Heart right ventricle (tissue), 16 donors: ENCODE measurements at regions of chr6 and their contacts with region 1.

Region 1: GRCh38 chr6:164106345-164106769 is 691.8 kb downstream of the QKI start:
- DNase-seq: peak; percentile 70 to 79
- ATAC-seq: peak; percentile 26 to 70 (median 58)
- H3K4me3 ChIP-seq: peak overlapping the region in 8 of 10 donors; percentile 10 to 36 (median 30)
- H3K27ac ChIP-seq: peak overlapping the region; percentile 80 to 97 (median 90)
- H3K4me1 ChIP-seq: peaks cover 3 to 74% (median 37%) of the 10 kb centered on the region in 9 donors
- H3K27me3 ChIP-seq: no peaks in the 10 kb centered on the region
- CTCF ChIP-seq: peak; percentile 43 to 73 (median 67)

Region 2: DNA sequence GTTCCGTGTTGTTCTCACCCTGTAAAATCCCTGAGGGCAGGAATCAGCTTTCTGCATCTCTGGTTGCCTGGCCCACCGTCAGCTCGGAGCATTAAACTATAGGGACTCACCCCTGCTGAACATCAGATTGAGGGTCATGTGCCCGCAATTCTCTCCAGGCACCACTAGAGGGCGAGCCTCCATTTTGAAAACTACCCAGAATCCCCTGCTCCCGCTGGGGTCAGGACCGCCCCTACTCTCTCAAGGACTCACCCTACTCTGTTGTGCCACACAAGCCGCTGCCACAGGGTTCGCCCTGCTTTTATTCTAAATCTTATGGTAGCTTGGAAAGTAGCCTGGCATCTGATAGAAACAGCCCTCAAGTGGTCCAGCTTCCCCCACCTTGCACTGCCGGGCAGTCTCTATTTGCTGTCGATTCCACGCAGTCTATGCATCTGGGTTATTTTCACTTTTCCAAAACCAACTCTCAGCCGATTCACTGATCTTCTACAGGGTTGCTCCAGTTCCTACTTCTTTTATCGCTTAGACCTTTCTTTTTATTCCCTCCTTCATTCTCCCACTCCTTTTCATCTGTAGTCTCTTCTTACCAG is 936.0 kb before region 1 on chr6:
- intact Hi-C with region 1: loop called in 1 of 10 experiments (anchors 10 kb)
- DNase-seq: no peak
- ATAC-seq: peak in 1 of 8 donors; percentile 37
- H3K4me3 ChIP-seq: no peak overlapping the region
- H3K27ac ChIP-seq: no peak overlapping the region
- H3K4me1 ChIP-seq: no peaks in the 10 kb centered on the region
- H3K27me3 ChIP-seq: no peaks in the 10 kb centered on the region
- CTCF ChIP-seq: peak; percentile 16 to 69 (median 55)

Region 3: GRCh38 chr6:163413345-163414116 is 692.8 kb before region 1 on chr6:
- intact Hi-C with region 1: loop called in 7 of 10 experiments (anchors 2 to 10 kb)
- DNase-seq: peak; percentile 90 to 91
- ATAC-seq: peak; percentile 87 to 96 (median 90)
- H3K4me3 ChIP-seq: peak overlapping the region; percentile 48 to 85 (median 74)
- H3K27ac ChIP-seq: peak overlapping the region; percentile 95 to 100 (median 100)
- H3K4me1 ChIP-seq: peaks cover 0 to 28% (median 13%) of the 10 kb centered on the region in 9 donors
- H3K27me3 ChIP-seq: no peaks in the 10 kb centered on the region
- CTCF ChIP-seq: peak in 2 of 9 donors; percentile 6 to 8

Region 4: GRCh38 chr6:163565140-163565539 is 541.2 kb before region 1 on chr6:
- intact Hi-C with region 1: loop called in 2 of 10 experiments (anchors 10 kb)
- DNase-seq: no peak
- ATAC-seq: peak in 5 of 8 donors; percentile 48 to 70 (median 64)
- H3K4me3 ChIP-seq: no peak overlapping the region
- H3K27ac ChIP-seq: peak overlapping the region in 3 of 10 donors; percentile 5 to 40 (median 26)
- H3K4me1 ChIP-seq: peaks cover 0 to 75% (median 61%) of the 10 kb centered on the region in 9 donors
- H3K27me3 ChIP-seq: no peaks in the 10 kb centered on the region
- CTCF ChIP-seq: no peak

Region 5: DNA sequence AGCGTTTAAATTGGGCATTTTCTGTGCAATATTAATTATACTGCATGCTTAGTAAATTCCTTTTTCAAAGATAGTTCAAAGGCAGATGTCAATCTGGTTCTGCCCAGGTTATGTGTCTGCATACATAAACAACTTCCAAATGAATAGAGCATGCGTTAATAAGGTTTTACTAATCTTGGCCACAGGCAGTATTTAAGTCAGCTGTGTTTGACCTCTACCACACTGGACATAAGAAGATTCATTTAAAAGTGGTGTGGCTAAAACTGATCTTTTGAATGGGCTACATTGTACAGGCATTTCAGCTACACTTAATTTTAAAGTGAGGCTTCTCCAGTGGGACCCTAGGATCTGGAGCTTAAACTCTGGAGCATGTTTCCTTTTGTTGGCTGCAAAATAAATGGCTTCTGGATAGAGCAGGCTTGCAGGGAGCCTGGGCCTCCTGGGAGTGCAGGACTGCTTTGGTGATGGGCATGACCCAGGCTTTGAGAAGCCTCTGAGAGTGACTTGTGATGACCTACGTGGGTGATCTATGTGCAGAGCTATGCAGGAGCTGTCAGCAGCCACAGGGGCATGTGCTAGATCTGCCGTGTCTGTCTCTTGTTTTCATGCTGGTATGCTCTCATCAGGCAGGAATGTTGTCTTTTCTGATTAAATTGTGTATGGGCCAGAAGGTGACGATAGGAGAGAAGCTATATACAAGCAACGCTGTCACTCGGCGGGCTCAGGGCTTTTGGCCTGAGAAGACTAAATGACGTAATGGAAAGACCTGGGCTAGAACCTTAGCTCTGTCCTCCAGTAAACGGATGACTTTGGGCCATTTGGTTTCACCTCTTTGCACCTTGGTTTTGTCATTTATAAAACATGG is 360.6 kb before region 1 on chr6:
- intact Hi-C with region 1: loop called in 4 of 10 experiments (anchors 5 to 10 kb)
- DNase-seq: peak; percentile 52 to 71
- ATAC-seq: peak; percentile 83 to 95 (median 92)
- H3K4me3 ChIP-seq: no peak overlapping the region
- H3K27ac ChIP-seq: peak overlapping the region; percentile 36 to 87 (median 65)
- H3K4me1 ChIP-seq: peaks cover 8 to 59% (median 25%) of the 10 kb centered on the region in 9 donors
- H3K27me3 ChIP-seq: no peaks in the 10 kb centered on the region
- CTCF ChIP-seq: no peak

Region 6: DNA sequence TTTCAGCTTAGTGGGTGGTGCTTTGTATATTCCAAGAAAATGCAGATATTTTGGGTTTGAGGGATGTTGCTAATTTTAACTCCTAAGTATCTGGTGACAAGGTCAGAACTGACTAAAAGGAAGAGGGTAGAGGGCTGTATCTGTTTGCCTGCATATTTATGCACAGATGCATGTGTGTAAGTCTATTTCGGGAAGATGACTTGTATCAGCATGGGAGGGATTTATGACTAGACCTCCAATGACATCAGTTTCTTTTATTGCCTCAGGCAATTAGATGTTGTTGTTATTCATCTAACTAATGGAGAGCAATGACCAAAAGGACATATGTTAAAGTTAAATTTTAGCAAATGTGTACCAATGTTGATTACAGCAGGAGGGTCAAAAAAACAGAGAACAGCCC is 42.4 kb after region 1 on chr6:
- intact Hi-C with region 1: loop called in 1 of 10 experiments (anchors 5 kb)
- DNase-seq: peak in 1 of 2 donors; percentile 16
- ATAC-seq: peak; percentile 54 to 95 (median 87)
- H3K4me3 ChIP-seq: no peak overlapping the region
- H3K27ac ChIP-seq: peak overlapping the region in 7 of 10 donors; percentile 17 to 82 (median 65)
- H3K4me1 ChIP-seq: peaks cover 0 to 30% (median 8%) of the 10 kb centered on the region in 9 donors
- H3K27me3 ChIP-seq: no peaks in the 10 kb centered on the region
- CTCF ChIP-seq: no peak